PC-9 (cell line): ENCODE measurements at regions of chr3 and their contacts with region 1.

Region 1: GRCh38 chr3:170811928-170812591 is 57.9 kb downstream of the RPL22L1 start:
- DNase-seq: peak; percentile 78 to 84
- H3K4me3 ChIP-seq: no peak overlapping the region
- H3K27ac ChIP-seq: no peak overlapping the region
- H3K4me1 ChIP-seq: peaks cover 55% of the 10 kb centered on the region
- H3K27me3 ChIP-seq: no peaks in the 10 kb centered on the region
- CTCF ChIP-seq: peak; percentile 100

Region 2: GRCh38 chr3:170189398-170190256 is 622.4 kb before region 1 on chr3:
- CTCF ChIA-PET with region 1: no interaction called
- POLR2A ChIA-PET with region 1: interaction called, 5 read pairs
- intact Hi-C with region 1: loop called (anchors 1 kb)
- DNase-seq: no peak
- H3K4me3 ChIP-seq: no peak overlapping the region
- H3K27ac ChIP-seq: no peak overlapping the region
- H3K4me1 ChIP-seq: no peaks in the 10 kb centered on the region
- H3K27me3 ChIP-seq: no peaks in the 10 kb centered on the region
- CTCF ChIP-seq: peak; percentile 23; the same call in 1 of the 2 replicates

Region 3: GRCh38 chr3:170357176-170357919 is 454.7 kb before region 1 on chr3 and contains the start of gene SKIL:
- CTCF ChIA-PET with region 1: interaction called, 4 read pairs
- POLR2A ChIA-PET with region 1: interaction called, 4 read pairs
- intact Hi-C with region 1: loop called (anchors 2 kb)
- DNase-seq: peak; percentile 91 to 98
- H3K4me3 ChIP-seq: peak within 1 kb of the TSS; percentile 74
- H3K27ac ChIP-seq: peak within 1 kb of the TSS; percentile 84
- H3K4me1 ChIP-seq: peaks cover 62% of the 10 kb centered on the region
- H3K27me3 ChIP-seq: no peaks in the 10 kb centered on the region
- CTCF ChIP-seq: no peak
- total RNA-seq, gene SKIL: 119 and 138 TPM in 2 replicates

Region 4: DNA sequence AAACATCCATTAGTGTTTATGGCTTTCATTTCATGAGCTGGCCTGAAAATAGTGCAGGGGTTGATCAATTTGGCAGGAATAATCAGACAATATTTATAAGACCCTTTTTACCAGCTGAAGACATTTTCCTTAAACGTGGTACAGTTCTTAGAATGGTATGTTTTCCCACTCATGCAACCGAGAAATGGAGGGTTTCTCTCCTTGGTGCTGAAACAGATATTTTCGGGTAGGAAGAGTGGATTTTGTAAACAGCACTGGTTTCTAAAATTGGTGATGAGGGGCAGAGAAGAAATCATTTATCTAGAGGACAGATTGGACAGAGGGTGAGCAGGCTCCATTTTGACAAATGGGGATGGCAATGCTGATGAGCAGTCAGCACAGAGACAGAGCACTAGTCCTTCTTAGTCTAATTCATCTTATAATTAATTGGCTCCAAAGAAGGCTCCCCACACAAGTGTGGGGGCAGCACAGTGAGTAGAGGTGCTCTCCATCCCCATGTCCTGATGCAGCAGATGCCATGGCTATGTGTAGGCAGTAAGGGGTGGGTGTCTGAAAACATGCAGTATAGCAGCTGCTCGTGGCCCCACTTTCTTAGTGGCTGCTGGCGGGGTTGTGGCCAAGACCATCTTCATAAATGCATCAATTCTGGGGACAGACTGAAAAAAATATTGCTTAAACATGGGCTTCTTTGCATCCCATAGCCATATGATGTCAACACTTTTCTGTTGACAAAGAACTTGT is 208.1 kb before region 1 on chr3:
- CTCF ChIA-PET with region 1: no interaction called
- POLR2A ChIA-PET with region 1: no interaction called
- intact Hi-C with region 1: loop called (anchors 5 kb)
- DNase-seq: no peak
- H3K4me3 ChIP-seq: no peak overlapping the region
- H3K27ac ChIP-seq: no peak overlapping the region
- H3K4me1 ChIP-seq: no peaks in the 10 kb centered on the region
- H3K27me3 ChIP-seq: no peaks in the 10 kb centered on the region
- CTCF ChIP-seq: no peak

Region 5: DNA sequence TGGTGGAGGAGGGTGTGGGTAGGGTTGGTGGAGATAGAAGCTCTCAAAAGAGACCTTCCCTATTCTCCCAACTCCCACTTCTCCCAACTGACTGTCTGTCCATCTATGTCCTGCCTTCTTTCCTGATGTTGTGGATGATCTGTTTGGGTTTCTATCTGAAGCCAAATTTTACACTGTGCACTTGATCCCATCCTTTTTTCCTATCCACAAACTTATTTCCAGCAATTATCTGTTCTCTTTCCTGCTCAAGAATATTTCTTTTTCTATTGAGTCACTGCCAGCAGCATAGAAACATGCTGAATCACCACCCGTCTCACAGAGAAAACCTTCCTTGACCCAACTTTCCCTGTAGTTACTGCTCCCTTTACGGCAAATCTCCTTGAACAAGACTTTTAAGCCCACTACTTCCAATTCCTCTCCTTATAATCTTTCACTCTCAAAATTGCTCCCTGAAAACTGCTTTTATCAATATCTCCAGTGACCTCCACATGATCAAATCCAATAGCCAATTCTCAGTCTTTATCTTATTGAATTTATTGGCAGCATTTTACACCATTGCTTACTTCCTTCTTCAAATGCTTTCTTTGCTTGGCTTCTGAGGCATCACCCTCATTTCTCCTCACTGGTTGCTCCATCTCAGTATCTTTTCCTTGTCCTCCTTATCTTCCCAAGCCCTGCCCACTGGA is 84.9 kb before region 1 on chr3:
- CTCF ChIA-PET with region 1: no interaction called
- POLR2A ChIA-PET with region 1: no interaction called
- intact Hi-C with region 1: loop called (anchors 1 kb)
- DNase-seq: peak; percentile 43 to 76
- H3K4me3 ChIP-seq: peak overlapping the region; percentile 19; the same call in 1 of the 2 replicates
- H3K27ac ChIP-seq: peak overlapping the region; percentile 81
- H3K4me1 ChIP-seq: peaks cover 27% of the 10 kb centered on the region
- H3K27me3 ChIP-seq: no peaks in the 10 kb centered on the region
- CTCF ChIP-seq: no peak

Region 6: GRCh38 chr3:170848292-170848917 is 36.3 kb after region 1 on chr3:
- CTCF ChIA-PET with region 1: interaction called, 16 read pairs
- POLR2A ChIA-PET with region 1: interaction called, 8 read pairs
- intact Hi-C with region 1: loop called (anchors 2 kb)
- DNase-seq: no peak
- H3K4me3 ChIP-seq: no peak overlapping the region
- H3K27ac ChIP-seq: no peak overlapping the region
- H3K4me1 ChIP-seq: no peaks in the 10 kb centered on the region
- H3K27me3 ChIP-seq: no peaks in the 10 kb centered on the region
- CTCF ChIP-seq: peak; percentile 79